GM12878 (cell line): ENCODE measurements at regions of chr19 and their contacts with region 1.

Region 1: DNA sequence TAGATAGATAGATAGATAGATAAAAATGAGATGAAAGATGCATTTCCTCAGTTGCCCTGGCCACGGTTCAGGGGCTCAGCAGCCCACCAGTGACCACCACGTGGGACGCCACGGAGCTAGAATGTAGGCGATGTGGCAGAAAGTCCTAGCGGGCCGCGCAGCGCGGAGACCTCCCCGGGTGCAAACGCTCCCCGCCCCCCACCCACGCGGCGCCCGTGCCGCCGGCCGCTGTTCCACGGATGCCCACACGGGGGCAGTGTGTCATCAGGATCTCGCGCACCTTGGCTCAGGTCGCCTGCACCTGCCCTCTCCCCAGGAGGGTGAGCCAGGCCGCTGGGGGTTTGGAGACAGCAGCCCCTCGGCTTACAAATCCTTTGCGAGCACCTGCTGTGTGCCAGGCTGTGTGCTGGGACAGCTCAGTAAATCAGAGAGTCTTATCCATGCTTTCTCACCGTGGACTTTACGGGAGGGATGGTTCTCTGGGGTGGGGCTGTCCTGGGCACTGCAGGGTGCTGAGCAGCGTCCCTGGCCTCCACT is 13.7 kb upstream of the TLE5 start:
- DNase-seq: no peak
- ATAC-seq: peak; percentile 93
- H3K4me3 ChIP-seq: no peak overlapping the region
- H3K27ac ChIP-seq: no peak overlapping the region
- H3K4me1 ChIP-seq: no peaks in the 10 kb centered on the region
- H3K27me3 ChIP-seq: no peaks in the 10 kb centered on the region
- CTCF ChIP-seq: peak; percentile 81 to 97 (median 92)
- EP300 ChIP-seq: no peak
- POLR2A ChIP-seq: no peak
- RAD21 ChIP-seq: peak; percentile 88

Region 2: DNA sequence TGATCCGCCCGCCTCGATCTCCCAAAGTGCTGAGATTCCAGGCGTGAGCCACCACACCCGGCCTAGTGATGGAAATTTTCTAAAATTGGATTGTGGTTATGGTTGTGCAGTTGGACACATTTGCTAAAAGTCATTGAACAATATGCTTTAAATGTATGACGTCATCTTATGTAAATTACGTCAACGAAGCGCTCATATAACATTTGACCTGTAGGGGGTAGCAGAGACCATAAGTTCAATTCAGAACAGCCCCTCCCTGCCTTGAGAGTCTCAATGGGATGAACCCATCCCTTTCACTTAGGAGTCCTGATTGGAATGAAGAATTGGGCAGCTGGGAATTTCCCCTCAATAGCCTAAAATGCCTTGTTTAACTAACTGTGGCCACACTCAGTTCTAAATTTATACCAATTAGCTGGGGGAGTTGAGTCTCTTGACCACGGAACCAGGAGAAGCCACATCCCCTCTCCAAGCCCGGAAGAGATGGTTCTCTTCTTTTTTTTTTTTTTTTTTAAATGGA is 113.9 kb before region 1 on chr19:
- CTCF ChIA-PET with region 1: no interaction called
- POLR2A ChIA-PET with region 1: no interaction called
- RAD21 ChIA-PET with region 1: interaction called, 3 read pairs
- SMC1A ChIA-PET with region 1: interaction called, 5 read pairs
- in situ Hi-C with region 1: no loop called
- intact Hi-C with region 1: loop called (anchors 1 kb)
- DNase-seq: peak; percentile 65
- ATAC-seq: peak; percentile 78
- H3K4me3 ChIP-seq: no peak overlapping the region
- H3K27ac ChIP-seq: no peak overlapping the region
- H3K4me1 ChIP-seq: peaks cover 4% of the 10 kb centered on the region; the same call in 1 of the 2 replicates
- H3K27me3 ChIP-seq: no peaks in the 10 kb centered on the region
- CTCF ChIP-seq: peak; percentile 63 to 94 (median 65); a peak in 5 of 6 replicates
- EP300 ChIP-seq: no peak
- POLR2A ChIP-seq: no peak
- RAD21 ChIP-seq: peak; percentile 82

Region 3: GRCh38 chr19:2986951-2987524 is 88.9 kb before region 1 on chr19:
- CTCF ChIA-PET with region 1: no interaction called
- POLR2A ChIA-PET with region 1: no interaction called
- RAD21 ChIA-PET with region 1: no interaction called
- SMC1A ChIA-PET with region 1: no interaction called
- in situ Hi-C with region 1: no loop called
- intact Hi-C with region 1: no loop called
- DNase-seq: no peak
- ATAC-seq: no peak
- H3K4me3 ChIP-seq: no peak overlapping the region
- H3K27ac ChIP-seq: no peak overlapping the region
- H3K4me1 ChIP-seq: peaks cover 6% of the 10 kb centered on the region; the same call in 1 of the 2 replicates
- H3K27me3 ChIP-seq: no peaks in the 10 kb centered on the region; a peak in 2 of 4 replicates
- CTCF ChIP-seq: no peak
- EP300 ChIP-seq: no peak
- POLR2A ChIP-seq: no peak
- RAD21 ChIP-seq: no peak

Region 4: DNA sequence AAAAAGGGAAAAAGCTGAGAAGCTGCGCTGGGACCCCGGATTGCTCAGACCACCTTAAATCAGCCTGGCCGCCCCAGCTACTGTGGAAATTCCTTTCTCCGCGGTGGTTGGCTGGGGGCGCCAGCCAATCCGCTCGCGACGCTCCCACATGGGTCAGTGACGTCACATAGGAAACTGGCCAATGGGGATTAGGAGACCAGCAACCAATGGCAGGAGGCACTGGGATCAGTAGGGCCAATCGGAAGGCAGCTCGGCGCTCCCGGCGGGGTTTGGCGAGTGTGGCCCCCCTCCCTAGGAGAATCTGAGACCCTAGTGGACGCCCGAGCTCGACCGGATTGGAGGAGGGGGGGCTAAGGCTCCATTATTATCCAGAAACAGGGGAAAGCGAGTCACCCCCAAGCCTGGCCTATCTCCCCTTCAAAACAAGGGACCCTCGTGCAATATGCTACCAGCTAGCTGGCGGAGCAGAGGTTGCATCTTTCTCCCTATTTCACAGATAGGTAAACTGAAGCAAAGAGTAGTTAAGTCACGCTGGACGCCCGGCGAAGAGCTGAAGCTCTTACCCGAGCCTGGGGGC is 40.3 kb before region 1 on chr19:
- CTCF ChIA-PET with region 1: interaction called, 17 read pairs
- POLR2A ChIA-PET with region 1: no interaction called
- RAD21 ChIA-PET with region 1: interaction called, 5 read pairs
- SMC1A ChIA-PET with region 1: no interaction called
- in situ Hi-C with region 1: no loop called
- intact Hi-C with region 1: no loop called
- DNase-seq: peak; percentile 98
- ATAC-seq: peak; percentile 95
- H3K4me3 ChIP-seq: peak overlapping the region; percentile 90
- H3K27ac ChIP-seq: peak overlapping the region; percentile 71
- H3K4me1 ChIP-seq: peaks cover 16% of the 10 kb centered on the region
- H3K27me3 ChIP-seq: no peaks in the 10 kb centered on the region; a peak in 1 of 4 replicates
- CTCF ChIP-seq: no peak
- EP300 ChIP-seq: no peak
- POLR2A ChIP-seq: peak; percentile 78
- RAD21 ChIP-seq: no peak

Region 5: GRCh38 chr19:3100081-3100864 is 24.3 kb after region 1 on chr19:
- CTCF ChIA-PET with region 1: interaction called, 73 read pairs
- POLR2A ChIA-PET with region 1: no interaction called
- RAD21 ChIA-PET with region 1: interaction called, 5 read pairs
- SMC1A ChIA-PET with region 1: interaction called, 10 read pairs
- in situ Hi-C with region 1: no loop called
- intact Hi-C with region 1: no loop called
- DNase-seq: no peak
- ATAC-seq: no peak
- H3K4me3 ChIP-seq: no peak overlapping the region
- H3K27ac ChIP-seq: no peak overlapping the region
- H3K4me1 ChIP-seq: peaks cover 11% of the 10 kb centered on the region
- H3K27me3 ChIP-seq: no peaks in the 10 kb centered on the region; a peak in 2 of 4 replicates
- CTCF ChIP-seq: no peak
- EP300 ChIP-seq: no peak
- POLR2A ChIP-seq: no peak
- RAD21 ChIP-seq: no peak

Region 6: DNA sequence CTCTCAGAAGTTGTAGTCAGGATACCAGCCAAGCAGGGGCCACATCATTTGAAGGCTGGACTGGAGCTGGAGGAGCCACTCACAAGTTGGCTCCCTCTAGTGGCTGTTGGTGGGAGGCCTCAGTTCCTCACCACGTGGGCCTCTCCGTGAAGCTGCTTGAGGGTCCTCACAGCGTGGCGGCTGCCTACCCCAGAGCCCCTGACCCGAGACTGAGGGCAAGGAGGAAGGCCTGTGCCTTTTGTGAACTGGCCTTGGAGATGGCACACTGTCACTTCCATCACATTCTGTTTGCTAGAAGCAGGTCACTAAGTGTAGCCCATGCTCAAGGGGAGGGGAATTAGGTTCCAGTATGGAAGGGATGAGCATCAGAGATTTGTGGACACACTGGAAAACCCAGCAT is 32.8 kb after region 1 on chr19:
- CTCF ChIA-PET with region 1: interaction called, 73 read pairs
- POLR2A ChIA-PET with region 1: no interaction called
- RAD21 ChIA-PET with region 1: interaction called, 5 read pairs
- SMC1A ChIA-PET with region 1: interaction called, 10 read pairs
- in situ Hi-C with region 1: no loop called
- intact Hi-C with region 1: no loop called
- DNase-seq: no peak
- ATAC-seq: peak; percentile 96
- H3K4me3 ChIP-seq: no peak overlapping the region
- H3K27ac ChIP-seq: no peak overlapping the region
- H3K4me1 ChIP-seq: no peaks in the 10 kb centered on the region
- H3K27me3 ChIP-seq: no peaks in the 10 kb centered on the region
- CTCF ChIP-seq: peak; percentile 79 to 93 (median 88)
- EP300 ChIP-seq: no peak
- POLR2A ChIP-seq: no peak
- RAD21 ChIP-seq: peak; percentile 59

Region 7: GRCh38 chr19:3125900-3126524 is 50.0 kb after region 1 on chr19:
- CTCF ChIA-PET with region 1: interaction called, 15 read pairs
- POLR2A ChIA-PET with region 1: no interaction called
- RAD21 ChIA-PET with region 1: interaction called, 3 read pairs
- SMC1A ChIA-PET with region 1: no interaction called
- in situ Hi-C with region 1: no loop called
- intact Hi-C with region 1: loop called (anchors 10 kb)
- DNase-seq: no peak
- ATAC-seq: peak; percentile 91
- H3K4me3 ChIP-seq: no peak overlapping the region
- H3K27ac ChIP-seq: no peak overlapping the region
- H3K4me1 ChIP-seq: peaks cover 17% of the 10 kb centered on the region
- H3K27me3 ChIP-seq: no peaks in the 10 kb centered on the region
- CTCF ChIP-seq: peak; percentile 62 to 92 (median 84)
- EP300 ChIP-seq: no peak
- POLR2A ChIP-seq: no peak
- RAD21 ChIP-seq: peak; percentile 39

Region 8: DNA sequence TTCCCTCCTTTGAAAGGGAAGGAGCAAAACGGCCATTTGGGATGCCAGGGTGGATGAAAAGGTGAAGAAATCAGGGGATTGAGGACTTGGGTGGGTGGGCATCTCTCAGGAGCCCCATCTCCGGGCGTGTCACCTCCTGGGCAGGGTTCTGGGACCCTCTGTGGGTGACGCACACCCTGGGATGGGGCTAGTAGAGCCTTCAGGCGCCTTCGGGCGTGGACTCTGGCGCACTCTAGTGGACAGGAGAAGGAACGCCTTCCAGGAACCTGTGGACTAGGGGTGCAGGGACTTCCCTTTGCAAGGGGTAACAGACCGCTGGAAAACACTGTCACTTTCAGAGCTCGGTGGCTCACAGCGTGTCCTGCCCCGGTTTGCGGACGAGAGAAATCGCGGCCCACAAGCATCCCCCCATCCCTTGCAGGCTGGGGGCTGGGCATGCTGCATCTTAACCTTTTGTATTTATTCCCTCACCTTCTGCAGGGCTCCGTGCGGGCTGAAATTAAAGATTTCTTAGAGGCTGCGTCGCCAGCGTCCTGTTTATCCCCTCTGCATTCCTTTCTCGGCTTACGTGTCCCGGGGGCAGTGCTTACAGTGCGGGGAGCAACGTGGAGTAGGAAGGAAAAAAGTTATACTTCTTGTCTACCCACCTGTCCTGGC is 87.4 kb after region 1 on chr19:
- CTCF ChIA-PET with region 1: interaction called, 7 read pairs
- POLR2A ChIA-PET with region 1: interaction called, 3 read pairs
- RAD21 ChIA-PET with region 1: no interaction called
- SMC1A ChIA-PET with region 1: interaction called, 10 read pairs
- in situ Hi-C with region 1: loop called (anchors 5 kb)
- intact Hi-C with region 1: loop called (anchors 1 kb)
- DNase-seq: no peak
- ATAC-seq: peak; percentile 99
- H3K4me3 ChIP-seq: no peak overlapping the region
- H3K27ac ChIP-seq: no peak overlapping the region
- H3K4me1 ChIP-seq: no peaks in the 10 kb centered on the region
- H3K27me3 ChIP-seq: no peaks in the 10 kb centered on the region
- CTCF ChIP-seq: peak; percentile 95 to 99 (median 98); a peak in 5 of 6 replicates
- EP300 ChIP-seq: no peak
- POLR2A ChIP-seq: no peak
- RAD21 ChIP-seq: peak; percentile 94

Region 9: GRCh38 chr19:3450796-3451411 is 374.9 kb after region 1 on chr19:
- CTCF ChIA-PET with region 1: no interaction called
- POLR2A ChIA-PET with region 1: no interaction called
- RAD21 ChIA-PET with region 1: no interaction called
- SMC1A ChIA-PET with region 1: no interaction called
- in situ Hi-C with region 1: no loop called
- intact Hi-C with region 1: no loop called
- DNase-seq: no peak
- ATAC-seq: peak; percentile 74
- H3K4me3 ChIP-seq: no peak overlapping the region
- H3K27ac ChIP-seq: no peak overlapping the region
- H3K4me1 ChIP-seq: no peaks in the 10 kb centered on the region
- H3K27me3 ChIP-seq: no peaks in the 10 kb centered on the region
- CTCF ChIP-seq: no peak
- EP300 ChIP-seq: no peak
- POLR2A ChIP-seq: no peak
- RAD21 ChIP-seq: no peak